Left ventricle myocardium inferior (tissue), 1 donor: ENCODE measurements at regions of chr6 and their contacts with region 1.

Region 1: DNA sequence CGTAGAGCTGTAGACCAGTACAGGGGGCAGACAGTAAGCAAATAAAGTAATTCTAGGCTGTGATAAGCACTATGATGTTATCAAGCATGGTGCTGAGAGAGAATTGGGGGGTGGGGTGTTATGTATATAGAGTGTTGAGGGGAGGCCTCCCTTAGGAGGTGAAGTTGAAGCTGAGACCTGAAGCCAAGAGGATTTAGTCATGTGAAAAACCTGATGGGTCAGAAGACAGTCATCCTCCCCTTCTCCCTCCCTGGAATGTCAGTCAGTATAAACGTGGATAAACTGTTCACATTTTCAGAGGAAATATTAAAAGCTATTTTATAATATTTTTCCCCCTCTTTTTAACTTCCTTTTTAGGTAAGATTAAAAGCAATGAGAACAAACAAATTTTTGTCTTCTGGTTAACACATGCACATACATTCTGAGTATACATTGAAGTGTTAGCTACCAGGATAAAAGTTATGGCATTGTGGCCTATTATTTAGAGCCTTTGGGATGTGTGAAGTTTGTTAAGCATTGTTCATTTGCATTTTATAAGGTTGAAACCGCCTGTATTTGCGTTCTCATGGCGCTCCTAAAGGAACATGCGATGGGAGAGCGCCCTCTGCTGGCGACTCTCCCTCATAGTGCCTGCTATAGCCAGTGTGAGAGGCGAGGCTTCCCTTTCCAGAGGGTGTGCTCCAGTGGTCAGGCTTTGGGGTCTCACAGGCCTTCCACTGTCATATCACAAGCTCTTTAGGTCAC is 35.4 kb upstream of the MAPK13 start:
- DNase-seq: peak; percentile 82
- H3K4me3 ChIP-seq: no peak overlapping the region
- H3K27ac ChIP-seq: no peak overlapping the region
- H3K4me1 ChIP-seq: peaks cover 27% of the 10 kb centered on the region
- H3K27me3 ChIP-seq: no peaks in the 10 kb centered on the region
- CTCF ChIP-seq: peak; percentile 97

Region 2: DNA sequence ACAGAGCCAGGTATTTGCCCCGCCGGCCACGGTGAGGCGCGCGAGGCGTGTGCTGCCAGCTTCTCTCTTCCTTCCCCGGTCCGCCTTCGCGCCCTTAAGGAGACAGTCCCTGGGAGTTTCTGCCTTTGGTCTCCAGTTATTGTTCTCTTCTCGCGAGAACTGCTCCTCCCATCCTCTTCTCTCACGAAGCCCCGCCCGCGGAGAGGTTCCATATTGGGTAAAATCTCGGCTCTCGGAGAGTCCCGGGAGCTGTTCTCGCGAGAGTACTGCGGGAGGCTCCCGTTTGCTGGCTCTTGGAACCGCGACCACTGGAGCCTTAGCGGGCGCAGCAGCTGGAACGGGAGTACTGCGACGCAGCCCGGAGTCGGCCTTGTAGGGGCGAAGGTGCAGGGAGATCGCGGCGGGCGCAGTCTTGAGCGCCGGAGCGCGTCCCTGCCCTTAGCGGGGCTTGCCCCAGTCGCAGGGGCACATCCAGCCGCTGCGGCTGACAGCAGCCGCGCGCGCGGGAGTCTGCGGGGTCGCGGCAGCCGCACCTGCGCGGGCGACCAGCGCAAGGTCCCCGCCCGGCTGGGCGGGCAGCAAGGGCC is 67.3 kb before region 1 on chr6 and contains the start of gene MAPK14:
- intact Hi-C with region 1: loop called (anchors 2 kb)
- DNase-seq: peak; percentile 99
- H3K4me3 ChIP-seq: peak within 1 kb of the TSS; percentile 97
- H3K27ac ChIP-seq: peak within 1 kb of the TSS; percentile 96
- H3K4me1 ChIP-seq: peaks cover 49% of the 10 kb centered on the region
- H3K27me3 ChIP-seq: peaks cover 24% of the 10 kb centered on the region
- CTCF ChIP-seq: peak; percentile 90
- total RNA-seq, gene MAPK14: 24.5 TPM